Cardiac septum (tissue), 1 donor: ENCODE measurements at regions of chr19 and their contacts with region 1.

Region 1: GRCh38 chr19:48170038-48170812 is at the starts of genes LIG1 and ZSWIM9:
- DNase-seq: peak; percentile 96
- total RNA-seq, gene LIG1: 5.2 TPM
- total RNA-seq, gene ZSWIM9: 6.9 TPM

Region 2: DNA sequence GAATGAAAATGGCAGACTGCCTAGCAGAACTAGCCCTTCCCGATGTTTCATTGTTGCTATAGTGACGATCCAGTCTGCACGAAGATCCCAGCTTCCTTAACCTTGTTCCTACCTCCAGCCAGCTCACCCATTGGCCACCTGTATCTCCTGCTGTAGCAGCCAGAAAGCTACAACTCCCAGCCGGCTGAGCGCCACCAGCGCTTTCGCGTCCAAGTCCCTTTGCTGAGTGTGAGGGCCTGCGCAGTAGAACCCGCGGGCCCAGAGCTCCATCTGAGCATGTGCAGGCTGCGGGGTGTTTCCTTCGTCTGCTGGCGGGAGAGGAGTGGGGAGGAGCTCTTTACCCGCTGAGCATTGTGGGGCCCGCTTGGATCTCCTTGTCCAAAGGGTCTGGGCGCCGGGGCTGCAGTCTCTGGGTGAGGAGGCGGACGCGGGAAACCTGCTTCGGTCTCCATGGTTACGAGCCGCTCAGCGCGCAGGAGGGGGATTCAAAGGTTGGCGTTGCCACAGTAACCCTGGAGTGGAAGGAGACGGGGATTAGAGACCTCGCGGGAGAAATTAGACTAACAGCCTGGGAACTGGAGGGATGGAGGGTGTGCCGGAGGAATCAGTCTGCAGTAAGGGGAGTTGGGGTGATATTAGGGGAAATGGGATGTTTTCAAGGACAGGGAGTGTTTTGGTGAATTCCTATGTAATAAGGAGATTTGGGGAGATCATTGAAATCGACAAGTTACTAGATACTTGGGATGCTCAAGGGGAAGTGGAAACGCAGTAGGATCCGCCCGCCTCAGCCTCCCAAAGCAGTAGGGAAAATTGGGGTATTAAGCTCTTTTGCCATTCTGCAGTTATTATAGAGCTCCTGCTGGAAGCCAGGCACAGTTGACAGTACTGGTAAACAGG is 33.8 kb after region 1 on chr19:
- intact Hi-C with region 1: loop called (anchors 1 kb)
- DNase-seq: peak; percentile 97